ENCODE measurements at regions of chr1 and their contacts with region 1.

Region 1: GRCh38 chr1:154819628-154820590 is 50.2 kb downstream of the KCNN3 start:
- DNase-seq: peak; percentile 57
- H3K4me3 ChIP-seq: no peak overlapping the region; a peak in 1 of 4 replicates
- H3K27ac ChIP-seq: no peak overlapping the region
- H3K4me1 ChIP-seq: peaks cover 0 to 26% of the 10 kb centered on the region in 2 experiments; a peak in 1 of 4 replicates
- H3K27me3 ChIP-seq: no peaks in the 10 kb centered on the region
- CTCF ChIP-seq: peak; percentile 47
- EP300 ChIP-seq: no peak
- RAD21 ChIP-seq: peak; percentile 35

Region 2: GRCh38 chr1:154714638-154715037 is 105.3 kb before region 1 on chr1:
- CTCF ChIA-PET with region 1: no interaction called
- POLR2A ChIA-PET with region 1: no interaction called
- DNase-seq: no peak
- H3K4me3 ChIP-seq: no peak overlapping the region
- H3K27ac ChIP-seq: no peak overlapping the region
- H3K4me1 ChIP-seq: peaks cover 0 to 27% of the 10 kb centered on the region in 2 experiments; a peak in 2 of 4 replicates
- H3K27me3 ChIP-seq: no peaks in the 10 kb centered on the region
- CTCF ChIP-seq: no peak
- EP300 ChIP-seq: no peak
- RAD21 ChIP-seq: no peak

Region 3: GRCh38 chr1:154802982-154803920 is 16.7 kb before region 1 on chr1:
- CTCF ChIA-PET with region 1: interaction called, 29 read pairs
- POLR2A ChIA-PET with region 1: no interaction called
- DNase-seq: peak; percentile 63
- H3K4me3 ChIP-seq: no peak overlapping the region
- H3K27ac ChIP-seq: no peak overlapping the region
- H3K4me1 ChIP-seq: peaks cover 0 to 38% of the 10 kb centered on the region in 2 experiments; a peak in 1 of 4 replicates
- H3K27me3 ChIP-seq: peaks cover 65% of the 10 kb centered on the region
- CTCF ChIP-seq: no peak
- EP300 ChIP-seq: peak in 1 of 2 experiments; percentile 28; a peak in 1 of 4 replicates
- RAD21 ChIP-seq: no peak

Region 4: DNA sequence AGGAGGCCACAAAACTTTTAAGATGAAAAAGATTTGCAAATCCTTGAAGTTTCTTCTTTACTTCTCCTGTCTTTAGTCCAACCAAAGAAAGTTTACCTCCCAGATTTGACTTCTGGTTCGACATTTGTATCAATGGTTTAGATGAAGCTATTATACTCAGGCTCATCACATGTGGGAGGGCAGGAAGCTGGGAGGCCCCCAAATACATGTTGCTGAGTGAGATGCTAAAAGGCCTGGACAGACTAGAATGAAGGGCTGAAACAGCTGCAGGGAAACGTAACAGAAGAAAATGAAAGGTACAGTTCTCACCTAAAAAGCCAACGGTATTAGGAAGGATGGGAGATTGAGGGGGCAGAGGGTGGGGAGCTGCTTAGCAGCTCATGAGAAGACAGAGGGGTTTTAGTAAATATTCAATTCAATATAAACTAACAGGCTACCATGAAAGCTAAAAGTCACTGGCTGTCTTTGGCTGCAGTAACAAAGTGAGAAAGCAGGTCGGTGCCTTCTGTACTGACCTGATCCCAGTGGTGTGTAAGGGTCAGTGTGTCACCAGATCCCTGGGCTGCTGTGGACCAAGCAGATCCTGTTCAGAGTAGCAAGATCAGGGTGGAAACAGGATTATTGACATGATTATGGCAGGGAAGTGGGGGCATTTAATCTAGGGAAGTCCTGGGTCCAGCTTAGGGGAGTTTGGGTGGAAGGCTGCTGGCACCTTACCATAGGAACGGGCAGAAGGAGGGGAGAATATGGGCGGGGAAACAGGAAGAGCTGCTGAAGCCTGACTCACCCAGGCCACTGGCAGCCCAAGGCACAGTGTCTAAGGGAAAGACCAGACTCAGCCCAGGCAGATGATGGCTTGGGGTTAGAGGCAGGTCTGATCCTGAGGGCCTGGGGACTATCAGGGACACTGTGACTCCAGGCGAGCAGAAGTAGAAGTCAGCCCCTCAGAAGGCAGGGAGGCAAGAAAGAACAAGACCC is 10.2 kb before region 1 on chr1:
- CTCF ChIA-PET with region 1: interaction called, 29 read pairs
- POLR2A ChIA-PET with region 1: no interaction called
- DNase-seq: no peak
- H3K4me3 ChIP-seq: no peak overlapping the region
- H3K27ac ChIP-seq: no peak overlapping the region
- H3K4me1 ChIP-seq: peaks cover 0 to 46% of the 10 kb centered on the region in 2 experiments; a peak in 2 of 4 replicates
- H3K27me3 ChIP-seq: peaks cover 24% of the 10 kb centered on the region
- CTCF ChIP-seq: no peak
- EP300 ChIP-seq: no peak
- RAD21 ChIP-seq: no peak

Region 5: GRCh38 chr1:154833841-154834240 is 13.9 kb after region 1 on chr1:
- CTCF ChIA-PET with region 1: interaction called, 12 read pairs
- POLR2A ChIA-PET with region 1: no interaction called
- DNase-seq: no peak
- H3K4me3 ChIP-seq: no peak overlapping the region
- H3K27ac ChIP-seq: no peak overlapping the region
- H3K4me1 ChIP-seq: peaks cover 0 to 43% of the 10 kb centered on the region in 2 experiments; a peak in 1 of 4 replicates
- H3K27me3 ChIP-seq: no peaks in the 10 kb centered on the region; the same call in 1 of the 2 replicates
- CTCF ChIP-seq: no peak
- EP300 ChIP-seq: no peak
- RAD21 ChIP-seq: no peak